Pancreas (tissue), 10 donors: ENCODE measurements at regions of chr2 and their contacts with region 1.

Region 1: DNA sequence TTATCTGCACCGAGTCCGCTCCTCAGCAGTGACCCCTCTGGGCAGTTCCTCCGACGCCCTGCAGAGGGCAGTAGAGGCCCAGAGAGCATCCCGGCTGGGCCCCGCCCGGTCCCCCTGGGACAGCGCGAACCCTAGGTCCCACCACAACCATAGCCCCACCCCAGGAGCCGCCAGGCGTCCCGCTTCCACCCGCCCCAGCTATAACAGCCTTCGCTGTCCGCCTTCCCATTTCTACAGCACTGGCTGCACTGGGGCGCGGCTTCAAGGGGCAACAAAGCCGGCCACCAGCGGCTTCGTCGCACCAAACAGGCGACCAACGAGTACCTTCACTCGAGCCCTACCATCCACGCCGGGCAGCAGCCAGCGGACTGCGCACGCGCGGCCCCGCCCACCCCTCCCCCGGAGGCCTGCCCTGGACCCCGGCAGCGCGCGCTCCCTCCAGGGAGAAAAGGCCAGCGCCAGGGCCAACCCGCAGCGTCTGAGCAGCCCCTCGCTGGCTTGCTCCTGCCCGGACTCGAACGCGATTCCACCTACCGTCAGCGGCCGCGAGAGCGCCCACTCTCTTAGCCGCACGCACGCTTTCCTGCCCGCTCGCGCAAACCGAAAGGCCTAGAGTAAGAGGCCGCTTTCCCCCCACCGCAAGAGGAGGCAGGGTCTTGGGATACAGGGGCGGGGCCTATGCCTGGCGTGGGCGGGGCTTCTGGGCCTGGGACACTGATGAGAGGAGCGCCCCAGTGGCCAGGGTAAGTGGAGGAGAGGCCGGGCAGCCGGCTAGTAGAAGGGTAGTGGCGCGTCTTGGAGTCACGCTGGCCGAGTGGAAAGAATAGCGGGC is at the start of gene NHEJ1:
- DNase-seq: peak; percentile 94 to 98 (median 98)
- ATAC-seq: peak; percentile 94 to 98 (median 94)
- H3K4me3 ChIP-seq: peak within 1 kb of the TSS; percentile 40 to 61 (median 54)
- H3K27ac ChIP-seq: peak within 1 kb of the TSS; percentile 83 to 94 (median 84)
- H3K4me1 ChIP-seq: peaks cover 0 to 4% (median 0%) of the 10 kb centered on the region in 3 donors
- H3K27me3 ChIP-seq: no peaks in the 10 kb centered on the region
- CTCF ChIP-seq: peak; percentile 97 to 99 (median 98)
- total RNA-seq, gene NHEJ1: 3.9 to 8.7 (median 7.4) TPM

Region 2: DNA sequence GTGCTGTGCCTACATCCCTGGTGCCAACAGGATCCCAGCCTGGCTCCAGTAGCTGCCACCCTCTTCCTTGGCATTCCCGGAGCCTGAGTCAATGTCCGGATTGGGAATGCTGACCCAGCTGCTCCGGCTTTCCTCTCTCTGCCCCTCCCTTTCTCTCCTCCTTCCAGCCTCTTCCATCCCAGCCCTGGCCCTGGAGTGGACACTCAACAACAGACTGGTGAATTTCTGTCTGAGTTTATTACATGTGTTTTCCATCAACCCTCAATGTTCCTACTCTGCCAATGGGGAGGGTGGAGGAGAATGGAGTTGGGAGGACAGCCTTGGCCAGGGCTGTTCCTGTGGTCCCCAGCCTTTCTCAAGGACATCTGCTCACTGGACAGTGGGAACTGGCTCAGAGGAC is 327.9 kb before region 1 on chr2:
- intact Hi-C with region 1: no loop called
- DNase-seq: no peak
- ATAC-seq: no peak
- H3K4me3 ChIP-seq: no peak overlapping the region
- H3K27ac ChIP-seq: no peak overlapping the region
- H3K4me1 ChIP-seq: no peaks in the 10 kb centered on the region
- H3K27me3 ChIP-seq: no peaks in the 10 kb centered on the region
- CTCF ChIP-seq: no peak

Region 3: GRCh38 chr2:219308142-219309093 is 148.0 kb after region 1 on chr2:
- intact Hi-C with region 1: loop called in 1 of 3 experiments (anchors 10 kb)
- DNase-seq: peak in 5 of 6 donors; percentile 53 to 89 (median 77)
- ATAC-seq: peak; percentile 79 to 97 (median 84)
- H3K4me3 ChIP-seq: peak overlapping the region in 1 of 4 donors; percentile 6
- H3K27ac ChIP-seq: no peak overlapping the region
- H3K4me1 ChIP-seq: no peaks in the 10 kb centered on the region
- H3K27me3 ChIP-seq: peaks cover 0 to 13% (median 2%) of the 10 kb centered on the region in 4 donors
- CTCF ChIP-seq: no peak

Region 4: DNA sequence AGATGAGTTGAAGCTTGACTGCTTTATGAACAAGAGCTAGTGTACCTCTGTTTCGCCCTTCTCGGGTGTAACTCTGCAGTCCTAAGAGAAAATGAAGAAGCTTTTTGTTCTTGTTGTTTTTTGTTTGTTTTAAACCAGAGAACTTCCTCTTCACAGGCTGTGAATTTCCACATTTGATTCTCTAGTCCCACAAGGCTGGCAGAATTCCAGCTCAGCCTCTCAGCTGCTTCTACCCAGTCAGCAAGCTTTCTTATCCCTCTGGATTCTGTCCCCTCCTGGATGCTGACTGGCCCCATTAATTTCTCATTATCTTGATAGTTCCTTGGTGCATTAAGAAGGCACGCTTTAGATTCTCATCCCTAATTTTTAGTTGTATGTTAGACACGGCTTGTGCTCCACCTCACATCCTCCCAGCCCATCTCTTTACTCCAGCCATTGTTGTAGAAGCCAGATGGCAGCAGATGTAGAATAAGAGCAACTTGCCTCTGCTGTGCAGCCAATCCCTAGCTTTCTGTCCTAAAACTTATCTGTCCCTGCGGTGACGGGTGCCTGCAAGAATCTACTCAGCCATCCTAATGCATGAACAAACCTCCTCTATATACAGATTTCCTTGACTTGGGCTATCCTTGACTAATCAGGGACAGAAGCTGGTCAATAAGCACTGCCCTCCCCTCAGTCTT is 184.5 kb after region 1 on chr2:
- intact Hi-C with region 1: no loop called
- DNase-seq: peak in 2 of 6 donors; percentile 34 to 61
- ATAC-seq: peak in 3 of 4 donors; percentile 48 to 70 (median 51)
- H3K4me3 ChIP-seq: no peak overlapping the region
- H3K27ac ChIP-seq: no peak overlapping the region
- H3K4me1 ChIP-seq: no peaks in the 10 kb centered on the region
- H3K27me3 ChIP-seq: no peaks in the 10 kb centered on the region
- CTCF ChIP-seq: no peak

Region 5: DNA sequence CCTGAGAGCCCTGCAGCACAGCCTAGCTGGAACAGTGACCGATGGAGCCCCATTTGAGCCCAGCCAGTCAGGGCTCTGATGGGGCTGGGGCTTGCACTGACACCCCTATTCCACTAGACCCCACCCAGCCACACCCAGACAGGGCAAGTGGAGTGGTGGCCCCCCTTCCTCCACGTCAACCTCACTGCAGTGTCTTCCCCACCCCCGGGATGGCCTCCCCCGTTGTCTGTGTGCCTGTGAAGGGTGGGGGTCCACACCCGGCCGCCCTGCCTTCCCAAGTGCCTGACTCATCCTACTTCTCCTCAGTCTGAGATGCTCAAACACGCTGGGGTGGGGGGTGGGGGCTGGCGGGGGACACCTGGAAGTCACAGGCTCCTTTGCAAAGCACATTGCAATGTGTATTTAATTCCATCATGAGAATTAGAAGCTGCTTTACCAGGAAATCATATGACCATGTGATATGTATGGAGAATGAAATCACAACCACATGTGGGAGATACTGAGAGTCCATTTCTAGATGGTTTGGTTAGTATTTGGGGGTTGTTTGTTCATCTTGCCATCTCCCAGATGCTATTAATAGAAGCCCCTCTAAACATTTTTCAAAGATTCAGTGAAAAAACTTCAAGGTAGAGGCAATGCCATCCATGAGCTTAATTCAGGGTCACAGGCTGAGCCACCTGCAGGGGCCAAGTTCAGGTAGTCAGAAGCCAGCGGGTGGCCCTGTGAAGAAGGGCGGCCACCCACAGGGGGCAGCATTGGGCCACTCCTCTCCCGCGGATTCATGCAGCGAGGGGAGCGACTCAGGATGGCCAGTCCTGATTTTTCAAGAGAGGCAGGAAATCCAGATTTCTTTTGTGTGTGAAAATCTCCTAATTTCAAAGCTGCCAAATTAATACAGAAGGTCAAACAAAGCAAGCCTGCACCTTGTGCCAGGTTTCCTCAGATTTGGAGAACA is 315.6 kb after region 1 on chr2:
- intact Hi-C with region 1: no loop called
- DNase-seq: peak; percentile 55 to 94 (median 82)
- ATAC-seq: peak; percentile 78 to 99 (median 95)
- H3K4me3 ChIP-seq: no peak overlapping the region
- H3K27ac ChIP-seq: no peak overlapping the region
- H3K4me1 ChIP-seq: no peaks in the 10 kb centered on the region
- H3K27me3 ChIP-seq: no peaks in the 10 kb centered on the region
- CTCF ChIP-seq: peak; percentile 87 to 90 (median 88)